IMR-90 (cell line): ENCODE measurements at regions of chr11 and their contacts with region 1.

Region 1: DNA sequence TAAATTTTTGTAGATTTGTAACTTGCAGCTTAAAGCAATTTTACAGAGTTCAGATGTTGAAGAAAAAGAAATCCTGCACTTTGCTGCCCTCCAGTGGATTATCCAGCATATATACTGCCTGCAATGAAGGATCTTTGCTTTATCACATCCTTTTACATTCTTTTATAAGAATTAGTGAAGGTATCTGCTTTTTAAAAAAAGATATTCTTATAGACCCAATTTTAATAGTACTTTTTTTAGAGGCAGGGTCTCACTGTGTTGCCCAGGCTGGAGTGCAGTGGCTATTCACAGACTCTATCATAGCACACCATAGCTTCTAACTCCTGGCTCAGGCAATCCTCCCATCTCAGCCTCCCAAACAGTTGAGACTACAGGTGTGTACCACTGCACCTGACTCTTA is 60.7 kb downstream of the TTC17 start:
- DNase-seq: peak; percentile 53
- ATAC-seq: peak; percentile 83
- H3K4me3 ChIP-seq: no peak overlapping the region
- H3K27ac ChIP-seq: no peak overlapping the region
- H3K4me1 ChIP-seq: 0 out of 2 replicates have a peak, but pooled peaks cover 2% of the 10 kb centered on the region
- H3K27me3 ChIP-seq: no peaks in the 10 kb centered on the region
- CTCF ChIP-seq: peak; percentile 59
- POLR2A ChIP-seq: no peak
- RAD21 ChIP-seq: peak; percentile 66

Region 2: DNA sequence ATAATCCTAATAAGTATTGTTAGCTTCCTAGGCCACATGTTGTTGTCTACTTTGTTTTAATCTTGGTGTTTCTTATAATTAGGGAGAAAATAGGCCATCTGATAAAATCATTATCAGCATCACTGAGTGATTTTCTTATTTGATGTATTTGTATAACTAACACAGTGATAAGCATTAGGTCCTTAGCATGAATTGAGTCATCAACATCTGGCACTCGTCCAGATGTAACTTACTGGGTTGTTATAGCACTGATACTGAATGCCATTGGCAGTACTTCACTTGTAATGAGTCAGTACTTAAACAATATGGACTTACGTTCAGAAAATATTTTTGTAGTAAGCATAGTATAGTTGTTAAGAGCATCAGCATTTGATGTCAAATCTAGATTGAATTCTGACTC is 91.5 kb before region 1 on chr11:
- CTCF ChIA-PET with region 1: no interaction called
- POLR2A ChIA-PET with region 1: no interaction called
- dilution Hi-C with region 1: no loop called
- in situ Hi-C with region 1: no loop called
- intact Hi-C with region 1: loop called (anchors 5 kb)
- DNase-seq: peak; percentile 99
- ATAC-seq: peak; percentile 89
- H3K4me3 ChIP-seq: no peak overlapping the region
- H3K27ac ChIP-seq: no peak overlapping the region
- H3K4me1 ChIP-seq: no peaks in the 10 kb centered on the region
- H3K27me3 ChIP-seq: no peaks in the 10 kb centered on the region
- CTCF ChIP-seq: no peak
- POLR2A ChIP-seq: no peak
- RAD21 ChIP-seq: no peak